ENCODE measurements at regions of chr2 and their contacts with region 1.

Region 1: DNA sequence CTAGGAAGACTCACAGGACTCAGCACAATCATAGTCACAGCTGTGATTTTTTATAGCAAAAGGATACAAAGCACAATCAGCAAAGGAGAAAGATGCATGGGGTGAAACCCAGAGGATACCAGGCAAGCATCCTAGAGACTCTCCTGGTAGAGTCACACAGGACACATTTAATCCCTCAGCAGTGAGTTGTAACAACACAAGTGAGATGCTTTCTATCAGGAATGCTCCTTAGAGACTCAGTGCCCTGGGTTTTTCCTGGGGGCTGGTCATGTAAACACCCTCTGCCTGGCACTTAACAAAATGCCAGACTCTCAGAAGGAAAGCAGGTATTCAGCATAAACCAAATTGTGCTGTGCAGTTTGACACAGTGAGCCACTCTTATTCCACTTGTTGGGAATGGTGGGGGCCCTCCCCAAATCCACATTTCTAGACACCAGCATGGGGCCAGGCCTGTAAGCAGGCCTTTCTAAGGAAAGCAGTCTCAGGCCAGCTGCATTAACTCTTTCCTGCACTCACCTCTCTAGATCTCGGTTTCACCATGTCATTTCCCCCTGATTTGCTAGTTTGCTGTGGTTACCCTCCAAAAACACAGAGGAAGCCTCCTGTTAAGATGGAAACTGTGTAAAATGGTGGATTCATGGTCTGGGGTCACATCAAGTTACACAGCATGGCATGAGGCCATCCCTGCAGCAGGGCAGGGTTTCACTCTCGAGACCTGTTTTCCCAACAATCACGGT is 16.9 kb upstream of the RNU4ATAC start:
- DNase-seq: no peak
- ATAC-seq: no peak
- H3K4me3 ChIP-seq: no peak overlapping the region
- H3K27ac ChIP-seq: no peak overlapping the region
- H3K4me1 ChIP-seq: no peaks in the 10 kb centered on the region
- H3K27me3 ChIP-seq: no peaks in the 10 kb centered on the region
- CTCF ChIP-seq: no peak
- POLR2A ChIP-seq: no peak
- RAD21 ChIP-seq: no peak

Region 2: GRCh38 chr2:121412349-121412748 is 101.4 kb before region 1 on chr2:
- CTCF ChIA-PET with region 1: no interaction called
- POLR2A ChIA-PET with region 1: no interaction called
- dilution Hi-C with region 1: no loop called
- in situ Hi-C with region 1: no loop called
- intact Hi-C with region 1: loop called (anchors 5 kb)
- DNase-seq: no peak
- ATAC-seq: no peak
- H3K4me3 ChIP-seq: no peak overlapping the region
- H3K27ac ChIP-seq: no peak overlapping the region
- H3K4me1 ChIP-seq: no peaks in the 10 kb centered on the region; the same call in 1 of the 2 replicates
- H3K27me3 ChIP-seq: no peaks in the 10 kb centered on the region
- CTCF ChIP-seq: no peak
- POLR2A ChIP-seq: no peak
- RAD21 ChIP-seq: no peak

Region 3: DNA sequence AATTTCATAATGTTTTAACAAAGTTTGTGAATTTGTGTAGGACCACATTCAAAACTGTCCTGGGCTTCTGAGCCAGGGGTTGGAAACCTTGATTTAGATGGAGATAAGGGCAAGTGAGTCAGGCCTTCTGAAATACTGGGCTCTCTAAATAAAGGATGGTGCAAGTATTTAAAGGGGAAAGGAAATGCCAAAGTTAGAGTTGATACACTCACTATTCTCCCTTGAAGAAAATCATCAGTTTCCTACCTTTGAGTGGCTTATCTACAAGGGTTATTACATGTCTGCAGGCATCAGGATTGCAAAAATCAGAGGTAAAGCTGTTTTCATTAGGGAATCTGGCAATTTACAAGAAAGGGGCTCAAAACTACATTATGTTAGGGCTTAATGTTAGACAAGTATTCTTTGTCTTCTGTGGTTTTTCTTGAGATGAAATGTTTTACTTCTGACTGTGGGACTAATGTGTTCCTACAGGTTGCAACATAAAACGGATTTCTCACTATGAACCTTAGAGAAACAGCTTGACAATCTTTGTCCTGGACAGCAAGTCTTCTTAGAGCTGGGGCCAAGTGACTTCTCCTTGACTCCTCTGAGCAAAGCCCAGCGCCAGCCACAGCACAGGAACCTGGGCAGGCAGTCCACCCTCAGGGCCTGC is 48.0 kb after region 1 on chr2:
- CTCF ChIA-PET with region 1: no interaction called
- POLR2A ChIA-PET with region 1: no interaction called
- dilution Hi-C with region 1: no loop called
- in situ Hi-C with region 1: no loop called
- intact Hi-C with region 1: no loop called
- DNase-seq: peak; percentile 65
- ATAC-seq: peak; percentile 71
- H3K4me3 ChIP-seq: no peak overlapping the region
- H3K27ac ChIP-seq: peak overlapping the region; percentile 67
- H3K4me1 ChIP-seq: peaks cover 15% of the 10 kb centered on the region
- H3K27me3 ChIP-seq: no peaks in the 10 kb centered on the region
- CTCF ChIP-seq: no peak
- POLR2A ChIP-seq: no peak
- RAD21 ChIP-seq: no peak

Measured in IMR-90 (cell line).